Calu3 (cell line): ENCODE measurements at regions of chr22 and their contacts with region 1.

Region 1: GRCh38 chr22:29701155-29701999 is 18.4 kb upstream of the CABP7 start:
- DNase-seq: peak; percentile 66
- H3K4me3 Mint-ChIP-seq: no peak overlapping the region
- H3K27ac Mint-ChIP-seq: peak overlapping the region; percentile 43
- H3K4me1 Mint-ChIP-seq: peaks cover 14% of the 10 kb centered on the region
- H3K27me3 Mint-ChIP-seq: peaks cover 3% of the 10 kb centered on the region
- CTCF ChIP-seq: peak; percentile 29

Region 2: GRCh38 chr22:29184849-29185490 is 516.4 kb before region 1 on chr22:
- CTCF ChIA-PET with region 1: no interaction called
- intact Hi-C with region 1: no loop called
- DNase-seq: no peak
- H3K4me3 Mint-ChIP-seq: no peak overlapping the region
- H3K27ac Mint-ChIP-seq: no peak overlapping the region
- H3K4me1 Mint-ChIP-seq: no peaks in the 10 kb centered on the region
- H3K27me3 Mint-ChIP-seq: peaks cover 8% of the 10 kb centered on the region
- CTCF ChIP-seq: no peak

Region 3: GRCh38 chr22:29673361-29674066 is 27.9 kb before region 1 on chr22:
- CTCF ChIA-PET with region 1: no interaction called
- intact Hi-C with region 1: no loop called
- DNase-seq: no peak
- H3K4me3 Mint-ChIP-seq: no peak overlapping the region
- H3K27ac Mint-ChIP-seq: no peak overlapping the region
- H3K4me1 Mint-ChIP-seq: no peaks in the 10 kb centered on the region
- H3K27me3 Mint-ChIP-seq: no peaks in the 10 kb centered on the region
- CTCF ChIP-seq: no peak

Region 4: GRCh38 chr22:29683536-29683935 is 17.8 kb before region 1 on chr22:
- CTCF ChIA-PET with region 1: no interaction called
- intact Hi-C with region 1: no loop called
- DNase-seq: no peak
- H3K4me3 Mint-ChIP-seq: no peak overlapping the region
- H3K27ac Mint-ChIP-seq: no peak overlapping the region
- H3K4me1 Mint-ChIP-seq: no peaks in the 10 kb centered on the region
- H3K27me3 Mint-ChIP-seq: no peaks in the 10 kb centered on the region
- CTCF ChIP-seq: no peak

Region 5: DNA sequence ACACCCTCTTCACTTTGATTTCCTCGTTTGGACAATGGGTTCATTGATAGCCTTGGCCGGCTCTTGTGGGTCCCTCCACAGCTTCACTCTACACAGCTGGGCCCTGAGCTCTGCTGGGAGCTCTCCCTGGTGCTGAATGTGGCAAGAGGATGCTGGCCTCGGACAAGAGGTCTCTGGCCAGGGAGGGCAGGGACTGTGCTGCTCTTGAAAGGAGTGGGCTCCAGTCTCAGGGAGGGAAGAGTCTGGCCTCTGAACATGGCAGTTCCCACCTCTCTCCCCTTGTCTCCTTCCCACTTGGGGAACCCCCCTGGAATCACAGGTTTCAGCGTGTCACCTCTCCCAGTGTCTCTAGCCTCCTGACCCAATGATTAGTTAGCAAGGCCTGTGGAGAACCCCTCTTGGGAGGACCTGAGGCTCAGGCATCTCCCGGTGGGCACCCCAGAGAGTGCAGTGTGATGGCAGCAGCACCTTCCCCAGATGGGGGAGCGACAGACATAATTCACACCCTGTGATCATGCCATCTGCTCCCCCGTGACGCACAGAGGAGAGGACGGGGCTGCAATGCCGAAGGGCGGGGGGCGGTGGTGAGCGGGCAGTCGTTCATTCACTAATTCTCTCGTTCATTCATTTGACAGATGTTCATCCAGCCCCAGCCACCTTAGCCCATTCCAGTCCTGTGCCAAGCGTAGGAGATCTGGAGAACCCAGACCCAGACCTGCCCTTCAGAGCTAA is 15.6 kb after region 1 on chr22:
- CTCF ChIA-PET with region 1: interaction called, 13 read pairs
- intact Hi-C with region 1: no loop called
- DNase-seq: peak; percentile 89
- H3K4me3 Mint-ChIP-seq: no peak overlapping the region
- H3K27ac Mint-ChIP-seq: no peak overlapping the region
- H3K4me1 Mint-ChIP-seq: peaks cover 20% of the 10 kb centered on the region
- H3K27me3 Mint-ChIP-seq: peaks cover 91% of the 10 kb centered on the region
- CTCF ChIP-seq: no peak

Region 6: DNA sequence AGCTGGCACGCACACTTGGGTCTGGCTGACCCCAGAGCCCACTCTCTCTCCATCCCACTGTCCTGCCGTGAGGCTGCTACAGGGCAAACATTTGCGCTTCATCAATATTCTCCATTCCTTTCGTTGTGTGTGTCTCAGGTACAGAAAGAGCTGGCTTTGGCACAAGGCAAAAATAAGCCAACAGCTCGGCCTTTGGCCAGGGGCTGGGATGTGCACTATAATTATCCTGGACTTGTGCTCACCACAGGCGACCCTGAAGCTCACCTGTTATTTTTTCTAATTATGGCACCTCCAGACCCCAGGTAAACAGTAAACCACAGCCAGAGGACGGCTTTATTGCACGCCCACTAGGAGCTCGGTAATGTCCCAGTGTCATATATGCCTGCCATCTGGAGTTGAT is 54.5 kb after region 1 on chr22:
- CTCF ChIA-PET with region 1: no interaction called
- intact Hi-C with region 1: no loop called
- DNase-seq: no peak
- H3K4me3 Mint-ChIP-seq: no peak overlapping the region
- H3K27ac Mint-ChIP-seq: no peak overlapping the region
- H3K4me1 Mint-ChIP-seq: peaks cover under 1% of the 10 kb centered on the region
- H3K27me3 Mint-ChIP-seq: no peaks in the 10 kb centered on the region
- CTCF ChIP-seq: no peak

Region 7: DNA sequence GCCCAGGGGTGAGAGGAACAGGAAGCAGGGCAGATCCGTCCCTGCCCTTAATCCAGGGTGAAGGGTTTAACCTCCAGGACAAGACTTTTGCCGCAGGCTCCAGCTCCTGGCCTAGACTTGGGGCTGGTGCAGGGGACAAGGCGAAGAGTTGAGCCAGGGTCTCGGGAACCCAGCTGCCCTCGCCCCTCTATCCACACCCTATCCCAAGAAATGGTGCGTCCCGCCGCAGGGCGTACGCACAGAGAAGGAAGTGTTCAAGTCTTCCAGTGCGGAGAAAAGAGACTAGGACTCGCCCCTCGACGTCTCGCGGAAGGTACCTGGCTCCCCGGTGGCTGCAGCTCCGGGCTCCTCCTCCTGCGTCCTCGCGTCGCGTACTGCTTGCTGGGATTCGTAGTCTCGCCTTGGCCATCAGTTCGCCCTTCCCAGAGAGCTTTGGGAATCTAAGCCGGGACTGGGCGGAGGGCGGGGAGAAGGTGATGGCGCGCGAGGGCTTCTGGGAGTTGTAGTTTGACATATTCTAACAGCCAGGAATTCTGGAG is 65.3 kb after region 1 on chr22 and contains the start of gene ZMAT5:
- CTCF ChIA-PET with region 1: no interaction called
- intact Hi-C with region 1: loop called (anchors 5 kb)
- DNase-seq: peak; percentile 96
- H3K4me3 Mint-ChIP-seq: peak within 1 kb of the TSS; percentile 98
- H3K27ac Mint-ChIP-seq: peak within 1 kb of the TSS; percentile 94
- H3K4me1 Mint-ChIP-seq: peaks cover 31% of the 10 kb centered on the region
- H3K27me3 Mint-ChIP-seq: no peaks in the 10 kb centered on the region
- CTCF ChIP-seq: no peak
- total RNA-seq, gene ZMAT5: 20.5 and 21.0 TPM in 2 replicates